SK-N-SH (cell line): ENCODE measurements at regions of chr2 and their contacts with region 1.

Region 1: DNA sequence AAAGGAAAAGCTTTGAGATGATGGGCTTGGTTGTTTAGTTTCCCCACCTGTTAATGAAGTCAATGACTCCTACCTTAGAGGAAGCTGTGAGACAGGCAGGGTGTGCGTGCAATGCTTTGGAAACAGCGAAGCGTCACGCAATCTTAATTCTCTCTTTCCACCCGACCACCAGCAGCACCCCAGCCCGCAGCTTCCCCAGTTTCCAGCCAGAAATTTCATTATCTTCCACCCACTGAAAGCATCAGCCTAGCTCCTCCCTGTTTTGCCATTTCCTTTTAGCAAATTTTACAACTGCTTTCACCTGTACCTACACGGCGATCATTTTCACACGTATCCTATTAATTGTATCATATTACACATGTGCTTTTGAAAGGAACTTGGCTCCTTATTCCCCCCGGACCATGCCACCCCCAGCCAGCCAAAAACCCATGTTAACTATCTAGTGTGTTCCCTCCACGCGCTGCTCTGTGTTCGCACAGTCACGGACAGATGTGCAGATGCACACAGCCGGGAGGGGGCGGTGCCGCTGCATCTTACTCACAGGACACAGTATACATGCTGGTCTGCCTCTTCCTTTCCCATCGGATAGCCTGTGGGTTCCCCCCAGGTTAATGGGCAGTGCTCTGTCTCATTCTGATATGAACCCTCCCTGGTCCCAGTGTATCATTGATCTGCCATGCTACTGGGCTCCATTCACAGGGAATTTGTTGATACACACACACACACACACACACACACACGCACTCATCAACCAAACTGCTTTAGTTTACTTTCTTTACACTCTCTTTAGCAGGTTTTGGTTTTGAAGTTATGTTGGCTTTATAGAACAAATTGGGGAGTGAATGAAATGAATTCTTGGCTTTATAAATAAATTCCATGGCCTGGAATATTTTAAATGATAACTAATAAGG is 22.4 kb downstream of the CYP27C1 start:
- DNase-seq: peak; percentile 87
- H3K4me3 ChIP-seq: no peak overlapping the region; a peak in 2 of 4 replicates
- H3K27ac ChIP-seq: no peak overlapping the region
- H3K4me1 ChIP-seq: no peaks in the 10 kb centered on the region; a peak in 1 of 4 replicates
- H3K27me3 ChIP-seq: no peaks in the 10 kb centered on the region; the same call in 1 of the 2 replicates
- CTCF ChIP-seq: peak; percentile 59
- EP300 ChIP-seq: no peak
- RAD21 ChIP-seq: peak; percentile 84

Region 2: DNA sequence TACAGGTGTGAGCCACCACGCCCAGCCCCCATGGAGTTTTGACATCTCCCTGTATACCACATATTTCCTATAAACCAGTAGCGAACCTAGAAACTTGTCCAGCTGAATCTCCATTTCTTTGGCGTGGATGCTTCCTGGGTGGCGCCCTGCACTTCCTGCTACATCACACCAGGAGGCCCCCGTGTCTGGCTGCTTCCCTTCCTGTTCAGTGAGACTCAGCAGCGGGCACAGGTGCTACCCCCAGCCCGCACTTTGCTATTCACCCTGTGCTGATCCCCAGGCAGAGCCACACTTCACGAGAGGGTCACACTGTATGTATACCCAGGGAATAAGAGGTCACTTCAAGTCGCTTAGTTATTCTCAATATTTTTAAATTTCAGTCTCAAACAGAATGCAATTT is 12.6 kb before region 1 on chr2:
- CTCF ChIA-PET with region 1: interaction called, 12 read pairs
- POLR2A ChIA-PET with region 1: no interaction called
- DNase-seq: no peak
- H3K4me3 ChIP-seq: no peak overlapping the region
- H3K27ac ChIP-seq: no peak overlapping the region
- H3K4me1 ChIP-seq: no peaks in the 10 kb centered on the region
- H3K27me3 ChIP-seq: no peaks in the 10 kb centered on the region
- CTCF ChIP-seq: no peak
- EP300 ChIP-seq: no peak
- RAD21 ChIP-seq: no peak

Region 3: GRCh38 chr2:127208313-127208712 is 10.6 kb after region 1 on chr2:
- CTCF ChIA-PET with region 1: interaction called, 12 read pairs
- POLR2A ChIA-PET with region 1: no interaction called
- DNase-seq: no peak
- H3K4me3 ChIP-seq: no peak overlapping the region
- H3K27ac ChIP-seq: no peak overlapping the region
- H3K4me1 ChIP-seq: peaks cover 0 to 10% of the 10 kb centered on the region in 2 experiments; a peak in 2 of 4 replicates
- H3K27me3 ChIP-seq: no peaks in the 10 kb centered on the region
- CTCF ChIP-seq: no peak
- EP300 ChIP-seq: no peak
- RAD21 ChIP-seq: no peak

Region 4: GRCh38 chr2:127293748-127294562 is 96.2 kb after region 1 on chr2 and contains the start of gene ERCC3:
- CTCF ChIA-PET with region 1: interaction called, 14 read pairs
- POLR2A ChIA-PET with region 1: no interaction called
- DNase-seq: peak; percentile 95
- H3K4me3 ChIP-seq: peak within 1 kb of the TSS; percentile 93 to 98
- H3K27ac ChIP-seq: peak within 1 kb of the TSS; percentile 65 to 77
- H3K4me1 ChIP-seq: peaks cover 0 to 4% of the 10 kb centered on the region in 2 experiments; a peak in 1 of 4 replicates
- H3K27me3 ChIP-seq: no peaks in the 10 kb centered on the region
- CTCF ChIP-seq: no peak
- EP300 ChIP-seq: peak in 1 of 2 experiments; percentile 17; a peak in 1 of 4 replicates
- RAD21 ChIP-seq: no peak
- polyA plus RNA-seq, gene ERCC3: 84.8 and 101 TPM in 2 replicates